CD14-positive monocyte (primary cell): ENCODE measurements at regions of chr5 and their contacts with region 1.

Region 1: GRCh38 chr5:143014017-143014651 is 244.0 kb downstream of the ARHGAP26 start:
- DNase-seq: peak in 1 of 3 donors; percentile 27
- H3K4me3 ChIP-seq: no peak overlapping the region
- H3K4me3 Mint-ChIP-seq: no peak overlapping the region
- H3K27ac ChIP-seq: peak overlapping the region in 1 of 2 donors; percentile 10
- H3K27ac Mint-ChIP-seq: peak overlapping the region in 6 of 7 donors; percentile 28 to 74 (median 68)
- H3K4me1 ChIP-seq: peaks cover 15% of the 10 kb centered on the region in 2 donors
- H3K4me1 Mint-ChIP-seq: peaks cover 28% of the 10 kb centered on the region
- H3K27me3 ChIP-seq: no peaks in the 10 kb centered on the region
- H3K27me3 Mint-ChIP-seq: no peaks in the 10 kb centered on the region
- CTCF ChIP-seq: peak; percentile 49

Region 2: DNA sequence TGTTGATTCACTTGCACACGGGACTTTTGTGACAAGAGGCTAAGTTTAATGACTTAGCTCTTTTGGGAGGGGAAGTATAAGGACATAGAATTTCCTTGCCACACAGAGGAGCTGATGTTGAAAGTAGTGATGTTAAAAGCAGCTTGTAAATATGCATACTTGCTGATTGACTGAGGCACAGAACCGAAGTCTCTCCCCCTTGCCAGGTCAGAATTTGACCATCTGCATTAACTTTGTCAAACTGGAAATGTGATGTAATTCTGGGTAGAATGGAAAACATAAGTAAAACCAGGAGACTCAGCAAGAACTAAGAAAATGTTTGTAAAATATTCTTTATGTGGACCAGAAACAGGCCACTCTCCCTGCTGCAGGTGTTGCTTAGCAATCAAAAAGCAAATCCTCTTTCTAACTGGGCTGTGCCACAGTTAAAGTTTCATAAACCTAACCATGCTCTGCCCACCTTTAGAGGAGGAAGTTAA is 105.2 kb after region 1 on chr5:
- intact Hi-C with region 1: loop called in 1 of 2 experiments (anchors 5 kb)
- DNase-seq: peak; percentile 74 to 88 (median 86)
- H3K4me3 ChIP-seq: peak overlapping the region in 1 of 3 experiments; percentile 9
- H3K4me3 Mint-ChIP-seq: peak overlapping the region in 1 of 2 donors; percentile 71
- H3K27ac ChIP-seq: peak overlapping the region; percentile 92 to 97
- H3K27ac Mint-ChIP-seq: peak overlapping the region; percentile 95 to 100 (median 99)
- H3K4me1 ChIP-seq: peaks cover 37 to 39% of the 10 kb centered on the region in 2 donors
- H3K4me1 Mint-ChIP-seq: peaks cover 45% of the 10 kb centered on the region
- H3K27me3 ChIP-seq: no peaks in the 10 kb centered on the region
- H3K27me3 Mint-ChIP-seq: no peaks in the 10 kb centered on the region
- CTCF ChIP-seq: no peak